PC-9 (cell line): ENCODE measurements at regions of chr7 and their contacts with region 1.

Region 1: GRCh38 chr7:100889761-100890634 is 483 bp upstream of the UFSP1 start:
- DNase-seq: peak; percentile 77 to 96
- H3K4me3 ChIP-seq: peak overlapping the region; percentile 77
- H3K27ac ChIP-seq: peak overlapping the region; percentile 90
- H3K4me1 ChIP-seq: peaks cover 26% of the 10 kb centered on the region
- H3K27me3 ChIP-seq: 0 out of 2 replicates have a peak, but pooled peaks cover under 1% of the 10 kb centered on the region
- CTCF ChIP-seq: no peak

Region 2: GRCh38 chr7:100803398-100804233 is 86.4 kb before region 1 on chr7:
- CTCF ChIA-PET with region 1: no interaction called
- POLR2A ChIA-PET with region 1: interaction called, 4 read pairs
- intact Hi-C with region 1: loop called (anchors 5 kb)
- DNase-seq: peak in 1 of 2 experiments; percentile 76
- H3K4me3 ChIP-seq: no peak overlapping the region
- H3K27ac ChIP-seq: 0 out of 2 replicates have a peak overlapping the region, but pooled peaks have one; percentile 67
- H3K4me1 ChIP-seq: peaks cover 52% of the 10 kb centered on the region
- H3K27me3 ChIP-seq: no peaks in the 10 kb centered on the region
- CTCF ChIP-seq: no peak

Region 3: GRCh38 chr7:100867040-100867775 is 22.8 kb before region 1 on chr7 and contains the start of gene TRIP6:
- CTCF ChIA-PET with region 1: no interaction called
- POLR2A ChIA-PET with region 1: interaction called, 4 read pairs
- intact Hi-C with region 1: loop called (anchors 1 kb)
- DNase-seq: peak; percentile 80 to 92
- H3K4me3 ChIP-seq: peak within 1 kb of the TSS; percentile 99
- H3K27ac ChIP-seq: peak within 1 kb of the TSS; percentile 68
- H3K4me1 ChIP-seq: peaks cover 18% of the 10 kb centered on the region
- H3K27me3 ChIP-seq: no peaks in the 10 kb centered on the region
- CTCF ChIP-seq: no peak
- total RNA-seq, gene TRIP6: 89.3 and 91.4 TPM in 2 replicates

Region 4: GRCh38 chr7:100957832-100958421 is 67.9 kb after region 1 on chr7:
- CTCF ChIA-PET with region 1: no interaction called
- POLR2A ChIA-PET with region 1: interaction called, 17 read pairs
- intact Hi-C with region 1: no loop called
- DNase-seq: no peak
- H3K4me3 ChIP-seq: no peak overlapping the region
- H3K27ac ChIP-seq: no peak overlapping the region
- H3K4me1 ChIP-seq: no peaks in the 10 kb centered on the region
- H3K27me3 ChIP-seq: peaks cover 85% of the 10 kb centered on the region
- CTCF ChIP-seq: no peak

Region 5: GRCh38 chr7:101077303-101078089 is 187.5 kb after region 1 on chr7:
- CTCF ChIA-PET with region 1: no interaction called
- POLR2A ChIA-PET with region 1: no interaction called
- intact Hi-C with region 1: loop called (anchors 1 kb)
- DNase-seq: peak; percentile 86 to 96
- H3K4me3 ChIP-seq: no peak overlapping the region
- H3K27ac ChIP-seq: no peak overlapping the region
- H3K4me1 ChIP-seq: peaks cover 25% of the 10 kb centered on the region
- H3K27me3 ChIP-seq: no peaks in the 10 kb centered on the region
- CTCF ChIP-seq: peak; percentile 92

Region 6: GRCh38 chr7:101138213-101138870 is 248.3 kb after region 1 on chr7:
- CTCF ChIA-PET with region 1: no interaction called
- POLR2A ChIA-PET with region 1: interaction called, 3 read pairs
- intact Hi-C with region 1: loop called (anchors 5 kb)
- DNase-seq: peak; percentile 89 to 93
- H3K4me3 ChIP-seq: peak overlapping the region; percentile 11; the same call in 1 of the 2 replicates
- H3K27ac ChIP-seq: peak overlapping the region; percentile 91
- H3K4me1 ChIP-seq: peaks cover 53% of the 10 kb centered on the region
- H3K27me3 ChIP-seq: no peaks in the 10 kb centered on the region
- CTCF ChIP-seq: peak; percentile 98

Region 7: GRCh38 chr7:101542527-101543241 is 652.7 kb after region 1 on chr7:
- CTCF ChIA-PET with region 1: no interaction called
- POLR2A ChIA-PET with region 1: no interaction called
- intact Hi-C with region 1: loop called (anchors 10 kb)
- DNase-seq: peak in 1 of 2 experiments; percentile 77
- H3K4me3 ChIP-seq: no peak overlapping the region
- H3K27ac ChIP-seq: no peak overlapping the region
- H3K4me1 ChIP-seq: no peaks in the 10 kb centered on the region
- H3K27me3 ChIP-seq: no peaks in the 10 kb centered on the region
- CTCF ChIP-seq: peak; percentile 98